Head of caudate nucleus (tissue), 42 donors: ENCODE measurements at regions of chr5 and their contacts with region 1.

Region 1: GRCh38 chr5:10445352-10445751 is 3.7 kb downstream of the ROPN1L start:
- DNase-seq: no peak

Region 2: GRCh38 chr5:10615693-10616092 is 170.3 kb after region 1 on chr5:
- intact Hi-C with region 1: loop called (anchors 5 kb)
- DNase-seq: peak in 16 of 42 donors; percentile 27 to 81 (median 47)